Ovary (tissue), 10 donors: ENCODE measurements at regions of chr18 and their contacts with region 1.

Region 1: DNA sequence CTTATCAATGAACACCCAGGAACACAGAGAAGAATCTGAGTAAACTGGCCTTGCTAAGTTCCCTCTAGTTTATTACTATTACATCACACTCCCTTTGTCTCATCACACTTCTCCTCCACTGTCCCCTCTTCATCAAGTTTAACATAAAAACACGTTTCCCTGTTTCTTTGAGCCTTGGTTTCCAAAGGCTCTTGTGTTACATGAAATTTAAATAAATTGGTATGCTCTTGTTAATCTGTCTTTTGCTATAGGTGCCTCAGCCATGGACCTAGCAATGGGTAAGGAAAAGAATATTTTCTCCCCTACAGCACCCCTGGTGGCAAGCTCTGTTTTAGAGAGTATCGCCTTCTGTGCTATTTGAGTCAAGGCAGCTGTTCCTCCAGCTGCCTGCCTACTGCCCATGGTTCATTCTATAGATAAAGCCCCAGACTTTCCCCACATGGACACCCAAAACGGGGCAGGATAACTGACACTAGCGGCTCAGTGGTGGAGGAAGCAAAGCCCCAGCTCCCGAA is 31.8 kb downstream of the TGIF1 start:
- DNase-seq: peak in 1 of 5 donors; percentile 38
- H3K4me3 ChIP-seq: no peak overlapping the region
- H3K27ac ChIP-seq: no peak overlapping the region
- H3K4me1 ChIP-seq: peaks cover 2% of the 10 kb centered on the region
- H3K27me3 ChIP-seq: no peaks in the 10 kb centered on the region
- CTCF ChIP-seq: peak in 1 of 3 donors; percentile 41
- EP300 ChIP-seq: no peak
- POLR2A ChIP-seq: no peak

Region 2: DNA sequence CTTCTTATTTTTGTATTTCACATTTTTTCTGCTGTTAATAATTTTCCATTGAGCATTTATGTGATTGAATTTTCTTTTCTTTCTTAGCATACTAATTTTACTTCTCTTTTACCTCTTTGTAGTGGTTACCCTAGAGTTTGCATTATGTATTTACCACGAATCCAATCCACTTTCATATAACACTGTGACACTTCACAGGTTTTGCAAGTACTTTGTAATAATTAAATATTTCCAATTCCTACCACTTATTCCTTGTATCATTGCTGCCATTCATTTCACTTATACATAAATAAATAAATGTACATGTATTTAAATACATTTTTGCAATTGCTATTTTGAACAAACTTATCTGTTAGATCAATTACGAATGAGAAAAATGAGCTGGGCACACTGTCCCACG is 79.0 kb after region 1 on chr18:
- intact Hi-C with region 1: loop called in 1 of 4 experiments (anchors 10 kb)
- DNase-seq: no peak
- H3K4me3 ChIP-seq: no peak overlapping the region
- H3K27ac ChIP-seq: no peak overlapping the region
- H3K4me1 ChIP-seq: no peaks in the 10 kb centered on the region
- H3K27me3 ChIP-seq: no peaks in the 10 kb centered on the region
- CTCF ChIP-seq: no peak
- EP300 ChIP-seq: no peak
- POLR2A ChIP-seq: no peak